MCF 10A (cell line): ENCODE measurements at regions of chr3 and their contacts with region 1.

Region 1: GRCh38 chr3:76010252-76010651 is 224.9 kb upstream of the ZNF717 start:
- DNase-seq: no peak
- H3K4me3 Mint-ChIP-seq: no peak overlapping the region
- H3K27ac Mint-ChIP-seq: no peak overlapping the region
- H3K4me1 Mint-ChIP-seq: no peaks in the 10 kb centered on the region
- H3K27me3 Mint-ChIP-seq: peaks cover 23% of the 10 kb centered on the region
- CTCF ChIP-seq: no peak

Region 2: GRCh38 chr3:75781079-75781745 is 229.0 kb before region 1 on chr3:
- CTCF ChIA-PET with region 1: no interaction called
- POLR2A ChIA-PET with region 1: no interaction called
- intact Hi-C with region 1: no loop called
- DNase-seq: no peak
- H3K4me3 Mint-ChIP-seq: no peak overlapping the region
- H3K27ac Mint-ChIP-seq: no peak overlapping the region
- H3K4me1 Mint-ChIP-seq: no peaks in the 10 kb centered on the region
- H3K27me3 Mint-ChIP-seq: no peaks in the 10 kb centered on the region
- CTCF ChIP-seq: no peak

Region 3: GRCh38 chr3:76938962-76939361 is 928.7 kb after region 1 on chr3:
- CTCF ChIA-PET with region 1: no interaction called
- POLR2A ChIA-PET with region 1: no interaction called
- intact Hi-C with region 1: loop called (anchors 5 kb)
- DNase-seq: no peak
- H3K4me3 Mint-ChIP-seq: no peak overlapping the region
- H3K27ac Mint-ChIP-seq: no peak overlapping the region
- H3K4me1 Mint-ChIP-seq: no peaks in the 10 kb centered on the region
- H3K27me3 Mint-ChIP-seq: peaks cover 18% of the 10 kb centered on the region
- CTCF ChIP-seq: no peak